PC-3 (cell line): ENCODE measurements at regions of chr4 and their contacts with region 1.

Region 1: GRCh38 chr4:84151574-84151973 is 347.5 kb downstream of the NKX6-1 start:
- DNase-seq: peak; percentile 44
- ATAC-seq: peak; percentile 61; the same call in 1 of the 2 replicates
- H3K4me3 ChIP-seq: no peak overlapping the region
- H3K27ac ChIP-seq: no peak overlapping the region
- H3K4me1 ChIP-seq: no peaks in the 10 kb centered on the region
- H3K27me3 ChIP-seq: no peaks in the 10 kb centered on the region
- CTCF ChIP-seq: peak; percentile 50

Region 2: GRCh38 chr4:84503495-84504437 is 352.2 kb after region 1 on chr4:
- CTCF ChIA-PET with region 1: no interaction called
- POLR2A ChIA-PET with region 1: no interaction called
- intact Hi-C with region 1: loop called (anchors 2 kb)
- DNase-seq: peak; percentile 78
- ATAC-seq: peak; percentile 61
- H3K4me3 ChIP-seq: no peak overlapping the region
- H3K27ac ChIP-seq: no peak overlapping the region
- H3K4me1 ChIP-seq: no peaks in the 10 kb centered on the region
- H3K27me3 ChIP-seq: no peaks in the 10 kb centered on the region
- CTCF ChIP-seq: peak; percentile 82